ENCODE measurements at regions of chr10 and their contacts with region 1.

Region 1: DNA sequence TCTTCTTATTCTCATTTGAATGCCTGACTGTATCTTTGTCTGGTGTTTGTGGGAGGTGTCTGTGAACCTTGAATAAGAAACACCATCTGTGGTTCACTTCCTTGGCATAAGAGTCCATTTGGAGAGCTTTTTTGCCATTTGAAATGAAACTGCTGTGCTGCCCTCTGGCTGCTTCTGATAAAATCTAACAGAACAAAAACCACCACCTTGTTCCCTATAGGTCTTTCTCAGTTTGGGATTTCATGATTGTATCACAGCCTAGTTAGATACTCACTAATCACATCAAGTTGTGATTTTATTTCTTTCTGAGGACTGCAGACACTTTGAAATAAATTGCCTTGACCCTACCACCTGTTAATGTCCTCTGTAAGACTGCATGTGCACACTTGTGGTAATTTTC is 102.7 kb upstream of the FAM13C start:
- DNase-seq: no peak
- ATAC-seq: peak; percentile 50 to 89 (median 71)
- H3K4me3 ChIP-seq: no peak overlapping the region
- H3K27ac ChIP-seq: no peak overlapping the region
- H3K4me1 ChIP-seq: no peaks in the 10 kb centered on the region
- H3K27me3 ChIP-seq: no peaks in the 10 kb centered on the region
- CTCF ChIP-seq: peak; percentile 35 to 72 (median 46)
- POLR2A ChIP-seq: no peak

Region 2: GRCh38 chr10:58909881-58910280 is 555.2 kb before region 1 on chr10:
- intact Hi-C with region 1: no loop called
- DNase-seq: no peak
- ATAC-seq: no peak
- H3K4me3 ChIP-seq: no peak overlapping the region
- H3K27ac ChIP-seq: no peak overlapping the region
- H3K4me1 ChIP-seq: no peaks in the 10 kb centered on the region
- H3K27me3 ChIP-seq: no peaks in the 10 kb centered on the region
- CTCF ChIP-seq: no peak
- POLR2A ChIP-seq: no peak

Region 3: GRCh38 chr10:59258890-59259289 is 206.2 kb before region 1 on chr10:
- intact Hi-C with region 1: loop called in 1 of 2 experiments (anchors 10 kb)
- DNase-seq: no peak
- ATAC-seq: no peak
- H3K4me3 ChIP-seq: no peak overlapping the region
- H3K27ac ChIP-seq: no peak overlapping the region
- H3K4me1 ChIP-seq: no peaks in the 10 kb centered on the region
- H3K27me3 ChIP-seq: no peaks in the 10 kb centered on the region
- CTCF ChIP-seq: no peak
- POLR2A ChIP-seq: no peak

Region 4: DNA sequence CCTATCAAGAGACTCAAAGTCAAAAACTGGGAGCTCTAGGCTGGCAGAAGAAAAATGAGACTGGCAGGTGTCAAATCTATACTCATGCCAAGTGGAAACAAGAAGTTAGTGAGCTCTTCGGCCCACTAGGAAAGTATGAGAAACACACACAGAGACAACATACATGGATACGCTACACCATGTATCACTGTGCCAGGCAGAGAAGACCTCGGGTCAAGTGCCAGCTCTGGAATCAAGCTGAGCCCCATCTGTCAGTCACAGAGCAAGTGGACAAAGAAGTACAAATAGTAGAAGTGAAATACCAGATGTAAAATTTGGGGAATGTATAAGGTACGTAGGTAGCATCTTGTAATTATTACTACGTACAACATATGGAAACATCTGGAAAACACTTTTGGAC is 165.2 kb before region 1 on chr10:
- intact Hi-C with region 1: no loop called
- DNase-seq: no peak
- ATAC-seq: no peak
- H3K4me3 ChIP-seq: no peak overlapping the region
- H3K27ac ChIP-seq: no peak overlapping the region
- H3K4me1 ChIP-seq: no peaks in the 10 kb centered on the region
- H3K27me3 ChIP-seq: no peaks in the 10 kb centered on the region
- CTCF ChIP-seq: no peak
- POLR2A ChIP-seq: no peak

Measured in right lobe of liver (tissue), 6 donors.